ENCODE measurements at regions of chr11 and their contacts with region 1.

Region 1: DNA sequence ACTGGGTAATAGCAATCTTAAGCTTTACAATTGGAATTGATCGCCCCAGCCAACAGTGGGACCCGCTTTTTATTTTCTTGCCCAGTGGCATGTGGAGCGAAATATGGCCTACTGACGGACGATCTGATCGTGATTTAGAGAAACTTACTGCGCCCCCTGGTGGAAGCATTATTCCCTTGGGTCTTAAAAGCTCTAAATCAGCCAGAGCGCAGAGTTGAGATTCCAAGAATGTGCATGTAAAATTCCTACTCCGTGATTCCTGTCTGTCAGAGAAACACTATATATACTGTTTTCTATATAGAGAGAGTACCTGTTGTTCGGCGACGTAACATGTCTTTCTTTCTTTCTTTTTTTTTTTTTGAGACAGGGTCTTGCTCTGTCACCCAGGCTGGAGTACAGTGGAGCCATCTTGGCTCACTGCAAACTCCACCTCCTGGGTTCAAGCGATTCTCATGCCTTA is 3.7 kb upstream of the DPF2 start:
- DNase-seq: peak; percentile 43
- ATAC-seq: peak; percentile 60
- H3K4me3 ChIP-seq: no peak overlapping the region
- H3K27ac ChIP-seq: no peak overlapping the region
- H3K4me1 ChIP-seq: peaks cover 4% of the 10 kb centered on the region; the same call in 1 of the 2 replicates
- H3K27me3 ChIP-seq: no peaks in the 10 kb centered on the region
- CTCF ChIP-seq: peak; percentile 67 to 79 (median 72)
- EP300 ChIP-seq: no peak
- POLR2A ChIP-seq: no peak
- RAD21 ChIP-seq: peak; percentile 48

Region 2: DNA sequence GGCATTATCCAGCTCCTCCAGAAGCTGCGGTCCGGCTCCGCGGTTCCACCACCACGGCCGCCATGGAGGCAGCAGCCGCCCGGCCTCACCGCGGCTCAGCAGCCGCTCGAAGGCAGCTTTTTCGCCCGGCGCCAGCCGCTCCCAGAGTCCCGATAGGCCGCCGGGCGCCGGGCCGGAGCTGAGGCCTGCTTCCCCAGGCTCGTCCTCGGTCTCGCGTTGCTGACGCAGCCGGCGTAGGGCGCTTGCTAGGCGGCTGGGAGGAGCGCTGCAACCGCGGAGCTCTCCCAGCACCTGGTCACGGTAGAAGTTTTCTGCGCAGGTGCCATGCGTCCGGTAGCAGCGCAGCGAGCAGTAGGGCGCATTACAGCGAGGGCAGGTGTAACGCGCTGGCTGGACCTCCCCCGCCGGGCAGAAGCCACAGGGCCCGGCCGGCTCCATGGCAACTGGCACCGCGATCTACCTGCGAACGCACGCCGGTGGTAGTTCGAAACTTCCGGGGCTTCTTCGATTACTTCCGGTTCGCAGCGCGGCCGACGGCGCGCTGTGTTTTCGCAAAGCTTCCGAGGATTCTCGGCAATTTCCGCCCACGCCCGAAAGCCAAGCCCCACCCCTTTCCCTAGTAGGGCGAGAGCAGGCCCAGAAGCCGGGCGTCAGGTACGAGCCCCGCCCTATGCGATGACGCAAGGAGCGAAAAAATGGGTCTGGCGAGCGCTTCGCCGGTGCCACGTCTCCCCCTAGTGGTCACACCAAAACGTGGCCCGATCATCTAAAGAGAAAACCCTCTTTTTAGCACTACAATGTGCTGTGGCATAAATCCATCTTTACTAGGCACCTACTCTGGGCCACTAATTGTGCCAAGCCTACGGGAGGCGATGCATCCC is 212.5 kb before region 1 on chr11 and contains the start of gene ZNHIT2:
- CTCF ChIA-PET with region 1: interaction called, 3 read pairs
- POLR2A ChIA-PET with region 1: interaction called, 3 read pairs
- RAD21 ChIA-PET with region 1: interaction called, 5 read pairs
- SMC1A ChIA-PET with region 1: no interaction called
- in situ Hi-C with region 1: no loop called
- intact Hi-C with region 1: loop called (anchors 10 kb)
- DNase-seq: peak; percentile 97
- ATAC-seq: peak; percentile 75
- H3K4me3 ChIP-seq: peak within 1 kb of the TSS; percentile 76
- H3K27ac ChIP-seq: peak within 1 kb of the TSS; percentile 68
- H3K4me1 ChIP-seq: peaks cover 29% of the 10 kb centered on the region
- H3K27me3 ChIP-seq: no peaks in the 10 kb centered on the region
- CTCF ChIP-seq: peak; percentile 85 to 97 (median 93); a peak in 5 of 6 replicates
- EP300 ChIP-seq: no peak
- POLR2A ChIP-seq: peak; percentile 95
- RAD21 ChIP-seq: peak; percentile 78
- polyA plus RNA-seq, gene ZNHIT2: 0.40 TPM in 1 of 2 experiments, not detected in the other

Region 3: DNA sequence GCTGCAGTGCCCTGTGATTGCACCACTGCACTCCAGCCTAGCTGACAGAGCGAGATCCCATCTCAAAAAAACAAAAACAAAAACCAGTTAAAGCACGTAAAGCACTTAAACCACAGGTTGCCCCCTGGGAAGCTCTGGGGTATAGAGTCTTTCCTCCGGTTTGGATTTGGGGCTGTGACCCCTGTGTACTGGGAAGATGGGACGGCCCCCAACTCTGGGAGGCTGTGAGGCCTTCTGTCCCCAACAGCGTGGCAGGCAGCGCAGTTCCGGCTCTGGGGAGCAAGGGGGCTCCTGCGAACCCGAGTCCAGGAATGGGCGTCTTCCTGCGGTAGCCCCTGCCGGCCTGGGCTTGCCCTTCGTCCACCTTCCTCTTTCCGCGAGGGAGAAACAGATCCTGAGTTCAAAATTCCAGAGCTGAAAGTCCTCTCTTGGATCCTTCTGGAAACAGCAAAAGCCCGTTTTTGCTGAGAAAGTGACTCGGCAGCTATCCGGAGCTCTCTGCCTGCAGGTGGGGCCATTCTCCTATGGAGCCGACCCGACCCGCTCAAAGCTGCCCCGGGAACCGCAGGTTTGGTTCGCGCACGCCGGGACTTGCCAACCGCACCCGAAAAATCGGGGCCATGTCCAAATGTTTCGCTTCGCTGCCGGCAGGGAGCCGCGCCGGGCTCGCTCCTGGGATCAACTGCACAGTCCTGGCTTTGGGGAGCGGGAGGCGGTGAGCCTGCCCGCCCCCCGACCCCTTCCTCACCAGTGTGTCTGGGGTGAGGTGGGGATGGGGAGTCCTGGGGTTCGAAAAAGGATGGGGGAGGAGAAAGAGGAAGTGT is 104.5 kb before region 1 on chr11:
- CTCF ChIA-PET with region 1: interaction called, 121 read pairs
- POLR2A ChIA-PET with region 1: interaction called, 6 read pairs
- RAD21 ChIA-PET with region 1: interaction called, 15 read pairs
- SMC1A ChIA-PET with region 1: interaction called, 11 read pairs
- in situ Hi-C with region 1: no loop called
- intact Hi-C with region 1: no loop called
- DNase-seq: no peak
- ATAC-seq: peak; percentile 92
- H3K4me3 ChIP-seq: peak overlapping the region; percentile 58
- H3K27ac ChIP-seq: no peak overlapping the region; the same call in 1 of the 2 replicates
- H3K4me1 ChIP-seq: peaks cover 11% of the 10 kb centered on the region
- H3K27me3 ChIP-seq: no peaks in the 10 kb centered on the region; a peak in 1 of 4 replicates
- CTCF ChIP-seq: peak; percentile 52 to 63 (median 53)
- EP300 ChIP-seq: no peak
- POLR2A ChIP-seq: 0 out of 2 replicates have a peak, but pooled peaks have one; percentile 28
- RAD21 ChIP-seq: peak; percentile 55

Region 4: GRCh38 chr11:65274735-65275682 is 55.0 kb before region 1 on chr11:
- CTCF ChIA-PET with region 1: interaction called, 100 read pairs
- POLR2A ChIA-PET with region 1: interaction called, 10 read pairs
- RAD21 ChIA-PET with region 1: interaction called, 53 read pairs
- SMC1A ChIA-PET with region 1: interaction called, 64 read pairs
- in situ Hi-C with region 1: no loop called
- intact Hi-C with region 1: loop called (anchors 1 kb)
- DNase-seq: no peak
- ATAC-seq: peak; percentile 89
- H3K4me3 ChIP-seq: no peak overlapping the region
- H3K27ac ChIP-seq: no peak overlapping the region
- H3K4me1 ChIP-seq: peaks cover 6% of the 10 kb centered on the region; the same call in 1 of the 2 replicates
- H3K27me3 ChIP-seq: no peaks in the 10 kb centered on the region
- CTCF ChIP-seq: peak; percentile 68 to 94 (median 69)
- EP300 ChIP-seq: no peak
- POLR2A ChIP-seq: no peak
- RAD21 ChIP-seq: peak; percentile 90

Region 5: DNA sequence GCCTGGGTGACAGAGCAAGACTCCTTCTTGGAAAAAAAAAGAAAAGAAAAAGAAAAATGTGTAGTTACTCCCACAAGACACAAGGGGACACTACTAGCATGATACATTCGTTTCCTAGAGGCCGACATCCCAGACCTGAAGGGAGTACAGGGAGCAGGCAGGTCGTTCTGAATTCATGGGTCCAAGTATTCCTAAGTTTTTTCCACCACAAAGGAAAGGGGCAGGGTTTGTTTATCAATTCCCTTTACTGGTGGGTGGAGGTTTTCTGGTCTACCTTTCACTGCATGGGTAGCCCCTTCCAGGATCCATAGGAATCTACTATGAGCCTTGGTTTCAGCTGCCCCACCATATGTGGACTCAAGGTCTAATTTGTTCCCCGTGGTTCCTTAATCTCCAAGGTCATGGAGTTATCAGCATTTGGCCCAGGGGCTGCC is 36.4 kb after region 1 on chr11:
- CTCF ChIA-PET with region 1: interaction called, 10 read pairs
- POLR2A ChIA-PET with region 1: interaction called, 5 read pairs
- RAD21 ChIA-PET with region 1: interaction called, 5 read pairs
- SMC1A ChIA-PET with region 1: interaction called, 5 read pairs
- in situ Hi-C with region 1: no loop called
- intact Hi-C with region 1: no loop called
- DNase-seq: no peak
- ATAC-seq: peak; percentile 42
- H3K4me3 ChIP-seq: no peak overlapping the region
- H3K27ac ChIP-seq: no peak overlapping the region
- H3K4me1 ChIP-seq: peaks cover 16% of the 10 kb centered on the region
- H3K27me3 ChIP-seq: no peaks in the 10 kb centered on the region; a peak in 1 of 4 replicates
- CTCF ChIP-seq: peak; percentile 74 to 79 (median 76)
- EP300 ChIP-seq: no peak
- POLR2A ChIP-seq: no peak
- RAD21 ChIP-seq: peak; percentile 94

Measured in GM12878 (cell line).